ENCODE measurements at regions of chr12 and their contacts with region 1.

Region 1: DNA sequence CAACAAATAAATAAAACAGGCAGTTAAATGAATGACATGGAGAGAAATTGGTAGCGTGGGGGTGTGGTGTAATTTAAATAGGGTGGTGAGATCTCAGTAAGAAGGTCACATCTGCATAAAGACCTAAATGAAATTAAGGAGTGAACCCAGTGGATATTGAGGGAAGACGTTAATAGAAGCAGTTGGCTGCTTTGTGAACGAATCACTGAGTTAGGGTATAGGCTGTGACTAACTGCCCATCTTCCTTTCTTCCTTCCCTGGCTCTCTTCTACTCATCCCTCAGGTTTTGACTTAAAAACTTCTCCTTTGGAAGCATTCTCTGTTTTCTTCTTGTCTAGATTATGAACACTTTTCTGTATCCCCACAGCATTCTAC is 64.7 kb downstream of the BTG1 start:
- DNase-seq: no peak
- ATAC-seq: no peak
- H3K4me3 Mint-ChIP-seq: no peak overlapping the region
- H3K27ac Mint-ChIP-seq: peak overlapping the region; percentile 62
- H3K4me1 Mint-ChIP-seq: peaks cover 70% of the 10 kb centered on the region
- H3K27me3 Mint-ChIP-seq: no peaks in the 10 kb centered on the region
- CTCF ChIP-seq: no peak

Region 2: DNA sequence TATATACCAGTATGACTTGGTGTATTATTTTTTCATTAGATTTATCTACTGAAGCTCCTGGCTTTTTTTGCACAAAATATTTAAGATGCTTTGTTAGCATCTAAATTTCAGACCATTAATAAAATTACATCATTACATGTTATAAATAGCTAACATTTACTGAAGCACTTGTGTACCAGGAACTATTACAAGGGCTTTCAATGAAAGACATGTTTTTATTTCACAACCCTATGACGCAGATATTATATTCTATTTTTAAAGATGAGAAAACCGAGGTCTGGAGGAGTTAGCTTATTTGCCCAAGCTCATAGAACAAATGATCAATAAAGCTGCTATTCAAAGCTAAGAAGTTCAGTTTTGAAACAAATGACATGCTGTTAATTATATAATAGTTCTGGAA is 477.8 kb before region 1 on chr12:
- CTCF ChIA-PET with region 1: no interaction called
- POLR2A ChIA-PET with region 1: no interaction called
- intact Hi-C with region 1: no loop called
- DNase-seq: no peak
- ATAC-seq: no peak
- H3K4me3 Mint-ChIP-seq: no peak overlapping the region
- H3K27ac Mint-ChIP-seq: no peak overlapping the region
- H3K4me1 Mint-ChIP-seq: no peaks in the 10 kb centered on the region
- H3K27me3 Mint-ChIP-seq: no peaks in the 10 kb centered on the region
- CTCF ChIP-seq: no peak

Region 3: DNA sequence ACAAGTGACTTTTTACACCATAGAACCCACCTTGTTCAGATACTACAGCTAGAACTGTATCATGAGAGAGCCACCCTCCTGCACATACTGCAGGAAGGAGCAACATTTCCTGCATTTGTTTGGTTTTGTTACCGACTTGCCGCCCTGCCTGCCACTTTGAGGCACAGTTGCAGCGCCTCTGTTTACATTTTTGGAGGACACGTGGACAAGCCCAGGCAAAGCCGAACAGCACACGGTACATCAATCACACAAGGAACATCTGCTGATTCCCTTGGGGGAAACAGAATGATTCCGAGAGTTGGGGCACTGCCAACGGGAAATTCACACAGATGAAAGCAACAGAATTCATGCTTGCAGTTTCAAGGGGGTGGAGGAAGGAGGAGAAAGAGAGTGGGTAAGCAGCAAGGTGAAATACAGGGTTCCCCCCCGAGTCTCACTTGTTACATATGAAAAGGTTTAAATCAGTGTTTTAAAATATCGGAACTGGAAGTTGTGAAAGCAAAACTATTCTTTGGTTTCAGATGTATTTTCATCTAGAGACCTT is 46.0 kb before region 1 on chr12:
- CTCF ChIA-PET with region 1: interaction called, 3 read pairs
- POLR2A ChIA-PET with region 1: no interaction called
- intact Hi-C with region 1: loop called (anchors 5 kb)
- DNase-seq: peak; percentile 53
- ATAC-seq: peak; percentile 47
- H3K4me3 Mint-ChIP-seq: peak overlapping the region; percentile 82
- H3K27ac Mint-ChIP-seq: peak overlapping the region; percentile 90
- H3K4me1 Mint-ChIP-seq: peaks cover 81% of the 10 kb centered on the region
- H3K27me3 Mint-ChIP-seq: no peaks in the 10 kb centered on the region
- CTCF ChIP-seq: no peak

Region 4: GRCh38 chr12:92136965-92137721 is 56.2 kb after region 1 on chr12:
- CTCF ChIA-PET with region 1: no interaction called
- POLR2A ChIA-PET with region 1: no interaction called
- intact Hi-C with region 1: no loop called
- DNase-seq: no peak
- ATAC-seq: peak; percentile 41
- H3K4me3 Mint-ChIP-seq: peak overlapping the region; percentile 97
- H3K27ac Mint-ChIP-seq: peak overlapping the region; percentile 94
- H3K4me1 Mint-ChIP-seq: peaks cover 47% of the 10 kb centered on the region
- H3K27me3 Mint-ChIP-seq: no peaks in the 10 kb centered on the region
- CTCF ChIP-seq: no peak

Region 5: DNA sequence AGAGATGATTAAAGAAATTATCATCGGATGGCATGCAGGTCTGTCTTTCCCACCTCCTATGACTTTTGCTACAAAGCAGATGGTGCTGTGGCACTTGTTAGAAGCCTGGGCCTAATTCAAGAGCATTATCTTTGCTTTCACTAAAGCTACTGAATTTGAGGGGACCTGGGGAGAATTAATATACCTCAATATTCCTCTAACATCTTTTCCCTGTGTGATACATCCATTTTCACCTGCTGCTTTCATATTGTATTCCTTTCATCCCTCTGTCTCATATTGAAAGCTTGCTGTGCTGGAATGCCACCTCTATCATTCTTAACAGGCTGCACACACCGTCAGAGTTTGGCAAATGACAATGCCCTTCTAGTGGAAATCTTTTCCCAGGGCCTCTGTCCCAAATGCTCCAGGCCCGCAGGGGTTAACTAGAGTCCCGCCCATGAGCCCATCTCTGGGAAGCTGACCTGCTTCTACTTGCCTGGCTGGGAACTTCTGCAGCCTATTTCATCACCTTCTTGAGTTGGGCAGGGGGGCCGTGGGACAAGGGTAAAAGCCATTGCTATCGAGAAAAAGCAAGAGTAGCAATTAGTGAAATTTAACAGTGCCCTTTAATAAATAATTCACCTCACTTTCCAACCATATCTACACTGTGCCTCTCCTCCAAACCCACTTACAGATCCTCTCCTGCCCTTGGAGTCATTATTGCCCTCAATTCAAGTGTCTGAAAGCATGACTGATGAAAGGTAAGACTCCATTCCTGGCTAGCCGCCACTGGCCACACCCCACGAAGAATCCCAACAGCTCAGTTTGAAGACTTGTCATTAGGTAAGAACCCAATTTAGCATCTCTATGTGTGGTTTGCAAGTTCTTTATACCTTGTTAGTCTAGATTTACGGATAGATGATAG is 191.4 kb after region 1 on chr12:
- CTCF ChIA-PET with region 1: no interaction called
- POLR2A ChIA-PET with region 1: no interaction called
- intact Hi-C with region 1: no loop called
- DNase-seq: no peak
- ATAC-seq: no peak
- H3K4me3 Mint-ChIP-seq: no peak overlapping the region
- H3K27ac Mint-ChIP-seq: no peak overlapping the region
- H3K4me1 Mint-ChIP-seq: no peaks in the 10 kb centered on the region
- H3K27me3 Mint-ChIP-seq: no peaks in the 10 kb centered on the region
- CTCF ChIP-seq: no peak

Measured in activated CD8-positive, alpha-beta T cell treated with anti-CD3 and anti-CD28 coated beads for 36 hours (primary cell).